MCF 10A (cell line): ENCODE measurements at regions of chr17 and their contacts with region 1.

Region 1: DNA sequence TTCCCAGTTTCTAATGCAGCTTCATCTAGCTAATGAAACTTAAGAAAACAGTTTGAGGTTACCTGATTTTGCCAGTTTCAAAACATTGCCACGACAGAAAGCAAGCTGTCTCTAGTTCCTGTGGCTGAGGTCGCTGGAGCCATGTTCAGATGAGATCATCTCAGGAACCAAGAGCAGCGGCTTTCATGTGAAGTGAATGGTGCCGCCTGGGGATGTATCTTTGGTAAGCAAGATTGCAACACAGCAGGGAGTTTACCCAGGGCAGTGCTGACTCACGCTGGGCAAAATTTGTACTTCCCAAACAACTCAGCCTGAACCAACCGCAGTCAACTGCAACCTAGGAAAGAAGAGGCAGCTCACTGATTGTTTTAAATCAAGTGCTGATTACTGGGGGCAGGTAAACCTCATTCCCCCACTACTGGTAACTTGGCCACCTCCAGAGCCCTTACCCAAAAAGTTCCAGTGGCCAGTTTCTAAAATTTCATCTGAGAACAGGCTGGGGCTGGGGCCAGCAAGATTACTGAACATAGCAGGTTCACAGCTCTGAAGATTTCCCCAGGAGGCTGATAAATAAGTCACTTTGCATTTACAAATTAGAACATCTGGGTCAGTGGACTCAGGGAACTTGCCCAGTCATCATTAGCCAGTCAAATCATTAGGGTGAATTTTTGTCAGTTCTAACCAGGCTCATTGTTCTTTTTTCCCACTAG is at the start of gene RFFL:
- DNase-seq: peak; percentile 98
- H3K4me3 Mint-ChIP-seq: peak within 1 kb of the TSS; percentile 73
- H3K27ac Mint-ChIP-seq: peak within 1 kb of the TSS; percentile 95
- H3K4me1 Mint-ChIP-seq: peaks cover 26% of the 10 kb centered on the region
- H3K27me3 Mint-ChIP-seq: no peaks in the 10 kb centered on the region
- CTCF ChIP-seq: no peak
- total RNA-seq, gene RFFL: 22.0 and 22.6 TPM in 2 replicates

Region 2: GRCh38 chr17:34980681-34981537 is 82.8 kb before region 1 on chr17:
- CTCF ChIA-PET with region 1: interaction called, 4 read pairs
- POLR2A ChIA-PET with region 1: interaction called, 15 read pairs
- intact Hi-C with region 1: no loop called
- DNase-seq: peak; percentile 83
- H3K4me3 Mint-ChIP-seq: peak overlapping the region; percentile 75
- H3K27ac Mint-ChIP-seq: peak overlapping the region; percentile 89
- H3K4me1 Mint-ChIP-seq: peaks cover 27% of the 10 kb centered on the region
- H3K27me3 Mint-ChIP-seq: no peaks in the 10 kb centered on the region
- CTCF ChIP-seq: peak; percentile 39

Region 3: DNA sequence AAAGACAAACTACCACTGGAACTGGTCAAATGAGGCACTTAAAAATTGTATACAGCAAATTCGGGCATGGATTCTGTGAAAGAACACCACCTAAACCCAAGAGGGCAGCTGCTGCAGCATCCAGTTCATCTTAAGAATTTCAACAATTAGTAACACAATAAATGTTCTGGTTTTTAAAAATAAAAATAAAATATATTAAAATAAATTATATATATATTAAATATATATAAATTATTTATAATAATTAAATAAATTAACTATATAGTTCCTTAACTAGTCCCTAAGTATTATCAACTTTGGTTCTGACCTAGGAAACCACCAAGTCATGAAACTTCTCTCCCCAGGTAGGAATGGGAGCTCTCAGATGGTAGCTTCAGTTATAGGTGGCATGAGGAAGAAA is 13.2 kb after region 1 on chr17:
- CTCF ChIA-PET with region 1: interaction called, 12 read pairs
- POLR2A ChIA-PET with region 1: interaction called, 119 read pairs
- intact Hi-C with region 1: loop called (anchors 2 kb)
- DNase-seq: no peak
- H3K4me3 Mint-ChIP-seq: no peak overlapping the region
- H3K27ac Mint-ChIP-seq: no peak overlapping the region
- H3K4me1 Mint-ChIP-seq: peaks cover 29% of the 10 kb centered on the region
- H3K27me3 Mint-ChIP-seq: no peaks in the 10 kb centered on the region
- CTCF ChIP-seq: no peak

Region 4: DNA sequence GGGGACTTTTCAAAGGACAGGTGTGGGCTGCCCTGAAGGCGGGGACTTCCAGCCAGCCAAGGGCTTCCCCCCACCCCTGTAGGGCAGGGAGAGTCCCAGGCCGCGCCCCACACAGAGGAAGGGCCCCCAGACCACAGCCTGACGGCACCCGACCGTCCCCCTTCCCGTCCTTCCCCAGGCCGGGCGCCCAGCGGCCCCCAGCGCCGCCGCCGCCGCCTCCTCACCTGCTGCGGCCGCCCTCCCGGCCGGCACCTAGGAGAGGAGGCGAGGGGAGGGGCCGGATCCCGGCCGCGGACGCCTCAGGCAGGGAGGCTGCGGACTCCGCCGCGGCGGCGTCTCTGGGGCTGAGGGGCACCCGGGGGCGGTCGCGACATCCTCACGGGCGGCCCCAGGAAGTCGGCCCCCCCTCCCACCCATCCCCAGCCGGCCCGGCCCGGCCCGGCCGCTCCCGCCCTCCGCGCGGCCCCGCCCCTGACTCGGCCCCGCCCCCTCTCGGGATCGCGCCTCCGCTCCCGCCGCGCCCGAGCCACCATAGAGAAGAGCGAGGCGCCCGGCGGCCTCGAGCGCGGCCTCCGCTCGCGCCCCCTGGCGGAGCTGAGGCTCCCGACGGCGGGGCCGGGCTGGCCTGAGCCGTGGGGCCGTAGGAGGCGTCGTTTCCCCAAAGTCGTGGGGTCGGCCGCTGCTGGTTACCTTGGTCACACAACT is 25.4 kb after region 1 on chr17:
- CTCF ChIA-PET with region 1: interaction called, 12 read pairs
- POLR2A ChIA-PET with region 1: interaction called, 119 read pairs
- intact Hi-C with region 1: loop called (anchors 1 kb)
- DNase-seq: peak; percentile 83
- H3K4me3 Mint-ChIP-seq: peak overlapping the region; percentile 80
- H3K27ac Mint-ChIP-seq: peak overlapping the region; percentile 84
- H3K4me1 Mint-ChIP-seq: peaks cover 11% of the 10 kb centered on the region
- H3K27me3 Mint-ChIP-seq: no peaks in the 10 kb centered on the region
- CTCF ChIP-seq: peak; percentile 72

Region 5: DNA sequence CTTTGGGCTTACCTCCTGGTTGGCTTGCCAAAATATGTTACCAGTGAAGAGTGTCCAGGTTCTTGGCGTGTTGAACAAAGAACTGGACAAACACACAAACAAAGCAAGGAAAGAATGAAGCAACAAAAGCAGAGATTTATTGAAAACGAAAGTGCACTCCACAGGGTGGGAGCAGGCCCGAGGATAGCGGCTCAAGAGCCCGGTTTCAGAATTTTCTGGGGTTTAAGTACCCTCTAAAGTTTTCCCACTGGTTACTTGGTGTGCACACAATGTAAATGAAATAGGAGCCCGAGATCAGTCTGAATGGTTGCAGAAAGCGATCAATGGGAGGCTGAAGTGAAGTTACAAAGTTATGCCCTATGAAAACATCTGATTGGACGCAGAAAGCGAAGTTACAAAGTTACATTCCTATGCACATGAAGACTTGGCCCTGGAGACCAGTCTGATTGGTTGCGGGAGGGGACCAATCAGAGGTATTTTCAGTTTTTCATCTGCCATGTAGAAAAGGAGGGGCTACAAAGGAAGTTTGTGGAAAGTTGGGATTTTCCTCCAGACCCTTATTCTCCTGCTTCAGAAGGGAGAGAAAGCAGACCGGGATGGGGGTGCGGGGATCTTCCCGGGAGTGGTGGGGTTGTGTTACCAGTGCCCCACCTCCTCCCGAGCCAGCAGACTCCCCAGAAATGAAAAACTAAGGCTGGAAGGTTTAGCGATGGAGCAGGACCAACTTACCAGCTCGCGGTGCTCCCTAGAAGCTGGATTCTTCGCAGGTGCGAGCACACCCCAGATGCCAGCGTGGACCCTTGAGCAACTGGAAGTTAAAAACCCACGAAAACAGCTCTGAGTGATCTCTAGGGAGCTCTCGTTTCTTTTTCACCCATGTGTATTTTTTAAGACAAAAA is 368.8 kb after region 1 on chr17 and contains the start of gene SLFN12:
- CTCF ChIA-PET with region 1: no interaction called
- POLR2A ChIA-PET with region 1: no interaction called
- intact Hi-C with region 1: loop called (anchors 5 kb)
- DNase-seq: peak; percentile 92
- H3K4me3 Mint-ChIP-seq: peak within 1 kb of the TSS; percentile 79
- H3K27ac Mint-ChIP-seq: peak within 1 kb of the TSS; percentile 85
- H3K4me1 Mint-ChIP-seq: peaks cover 21% of the 10 kb centered on the region
- H3K27me3 Mint-ChIP-seq: no peaks in the 10 kb centered on the region
- CTCF ChIP-seq: no peak
- total RNA-seq, gene SLFN12: 6.3 and 8.0 TPM in 2 replicates